ENCODE measurements at regions of chr9 and their contacts with region 1.

Region 1: GRCh38 chr9:134325817-134326723 is at the start of gene RXRA:
- DNase-seq: peak; percentile 86 to 94 (median 90)
- ATAC-seq: peak; percentile 19 to 72 (median 66)
- H3K4me3 ChIP-seq: peak within 1 kb of the TSS; percentile 50 to 99 (median 84)
- H3K27ac ChIP-seq: peak within 1 kb of the TSS; percentile 91 to 100 (median 97)
- H3K4me1 ChIP-seq: peaks cover 16 to 65% (median 50%) of the 10 kb centered on the region in 12 donors
- H3K27me3 ChIP-seq: no peaks in the 10 kb centered on the region
- CTCF ChIP-seq: peak in 6 of 12 donors; percentile 22 to 46 (median 30)
- POLR2A ChIP-seq: peak; percentile 4 to 89
- total RNA-seq, gene RXRA: 45.5 to 87.9 (median 52.9) TPM

Region 2: DNA sequence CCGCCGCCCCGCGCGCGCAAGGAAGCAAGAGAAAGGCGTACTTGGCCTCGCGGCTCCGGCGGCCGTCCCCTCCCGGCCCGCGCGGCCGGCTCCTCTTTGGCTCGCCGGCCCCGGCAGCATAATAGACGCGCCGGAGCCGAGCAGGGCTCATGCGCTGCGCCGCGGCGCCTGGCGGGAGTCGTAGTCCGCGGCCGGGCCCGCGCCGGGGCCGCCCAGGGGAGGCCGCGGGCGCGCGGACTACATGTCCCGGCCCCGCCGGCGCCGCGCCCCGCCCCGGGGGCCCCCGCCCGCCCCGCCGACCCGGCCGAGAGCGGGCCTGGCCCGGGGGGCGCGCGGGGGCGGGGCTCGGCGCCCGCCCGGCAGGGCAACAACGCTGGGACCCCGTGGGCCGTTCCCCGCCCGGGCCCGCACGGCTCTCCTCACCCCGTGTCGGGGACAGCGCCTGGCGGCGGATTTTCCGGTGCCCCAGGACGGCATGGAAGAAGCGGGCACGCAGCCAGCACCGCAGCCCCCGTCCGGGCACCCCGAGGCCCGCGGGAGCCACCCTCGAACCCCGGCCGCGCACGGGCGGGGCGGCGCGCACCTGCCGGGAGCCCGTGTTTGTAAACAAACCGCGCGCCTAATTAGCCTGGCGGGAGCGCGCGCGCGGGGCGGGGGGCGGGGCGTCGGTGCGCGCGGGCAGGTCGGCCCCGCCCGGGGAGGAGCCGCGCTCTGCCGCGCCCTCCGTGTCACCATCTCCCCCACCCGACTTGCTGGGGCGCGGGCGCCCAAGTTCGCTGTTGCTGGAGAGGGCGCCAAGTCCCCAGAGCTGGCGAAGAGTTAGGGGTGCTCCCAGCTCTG is 257.9 kb before region 1 on chr9 and contains the start of gene BRD3:
- intact Hi-C with region 1: loop called in 1 of 10 experiments (anchors 5 kb)
- DNase-seq: peak; percentile 87 to 93 (median 89)
- ATAC-seq: peak; percentile 84 to 93 (median 90)
- H3K4me3 ChIP-seq: peak within 1 kb of the TSS; percentile 64 to 100 (median 90)
- H3K27ac ChIP-seq: peak within 1 kb of the TSS; percentile 95 to 100 (median 98)
- H3K4me1 ChIP-seq: peaks cover 0 to 45% (median 32%) of the 10 kb centered on the region in 12 donors
- H3K27me3 ChIP-seq: peaks cover 0 to 2% (median 0%) of the 10 kb centered on the region in 9 donors
- CTCF ChIP-seq: no peak
- POLR2A ChIP-seq: peak; percentile 10 to 75
- total RNA-seq, gene BRD3: 14.0 to 37.3 (median 29.3) TPM

Region 3: GRCh38 chr9:134171316-134172197 is 154.5 kb before region 1 on chr9:
- intact Hi-C with region 1: loop called (anchors 2 to 10 kb)
- DNase-seq: no peak
- ATAC-seq: no peak
- H3K4me3 ChIP-seq: no peak overlapping the region
- H3K27ac ChIP-seq: peak overlapping the region in 7 of 12 donors; percentile 19 to 55 (median 31)
- H3K4me1 ChIP-seq: peaks cover 0 to 38% (median 16%) of the 10 kb centered on the region in 12 donors
- H3K27me3 ChIP-seq: peaks cover 0 to 24% (median 8%) of the 10 kb centered on the region in 9 donors
- CTCF ChIP-seq: no peak
- POLR2A ChIP-seq: no peak

Region 4: DNA sequence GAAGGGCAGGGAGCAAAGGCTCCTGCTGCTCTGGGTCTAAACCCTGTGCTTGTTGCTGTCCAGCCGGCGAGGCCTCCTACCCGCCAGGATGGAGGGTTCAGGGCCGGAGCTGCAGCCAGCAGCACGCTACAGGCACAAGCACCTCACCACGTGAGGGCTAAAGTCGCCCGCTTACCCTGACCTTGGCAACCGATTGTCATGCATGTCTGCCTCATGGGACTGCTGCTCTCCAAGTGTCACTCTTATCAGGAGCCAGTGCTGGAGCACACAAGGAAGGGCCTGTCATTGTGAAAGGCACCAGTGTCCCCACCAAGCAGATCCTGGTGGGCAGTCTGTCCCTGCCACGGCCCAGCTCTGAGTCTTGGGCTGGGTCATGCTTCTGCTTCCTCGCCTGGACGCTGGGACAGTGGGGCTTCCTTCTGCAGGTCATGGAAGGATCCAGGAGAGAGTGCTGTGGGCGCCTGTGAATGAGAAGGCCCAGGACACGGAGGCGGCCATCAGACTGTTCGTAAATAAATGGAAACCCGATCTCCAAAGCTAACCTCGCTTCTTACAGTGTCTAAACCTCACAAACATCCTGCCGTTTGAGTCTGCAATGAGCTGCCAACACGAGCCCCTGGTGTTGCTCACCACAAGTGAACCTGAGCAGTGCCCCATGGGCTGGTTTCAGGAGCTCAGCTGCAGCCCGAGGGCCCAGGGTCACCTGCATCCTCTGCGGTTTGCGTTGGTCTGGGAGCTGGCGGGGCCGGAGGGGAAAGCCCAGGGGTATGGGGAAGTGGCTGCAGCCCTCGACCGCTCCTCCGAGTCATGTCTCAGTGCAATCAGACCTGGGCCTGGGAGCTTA is 58.0 kb before region 1 on chr9:
- intact Hi-C with region 1: loop called in 2 of 10 experiments (anchors 5 kb)
- DNase-seq: peak in 4 of 5 donors; percentile 39 to 73 (median 55)
- ATAC-seq: peak; percentile 73 to 85 (median 80)
- H3K4me3 ChIP-seq: no peak overlapping the region
- H3K27ac ChIP-seq: peak overlapping the region in 11 of 12 donors; percentile 2 to 79 (median 57)
- H3K4me1 ChIP-seq: peaks cover 0 to 17% (median 10%) of the 10 kb centered on the region in 12 donors
- H3K27me3 ChIP-seq: peaks cover 0 to 26% (median 0%) of the 10 kb centered on the region in 9 donors
- CTCF ChIP-seq: no peak
- POLR2A ChIP-seq: no peak

Region 5: GRCh38 chr9:134365791-134366688 is 40.0 kb after region 1 on chr9:
- intact Hi-C with region 1: loop called in 3 of 10 experiments (anchors 2 to 5 kb)
- DNase-seq: peak; percentile 89 to 96 (median 91)
- ATAC-seq: peak; percentile 83 to 90 (median 86)
- H3K4me3 ChIP-seq: peak overlapping the region in 9 of 12 donors; percentile 9 to 37 (median 23)
- H3K27ac ChIP-seq: peak overlapping the region in 11 of 12 donors; percentile 45 to 93 (median 80)
- H3K4me1 ChIP-seq: peaks cover 15 to 92% (median 68%) of the 10 kb centered on the region in 12 donors
- H3K27me3 ChIP-seq: no peaks in the 10 kb centered on the region
- CTCF ChIP-seq: peak in 4 of 12 donors; percentile 12 to 38 (median 26)
- POLR2A ChIP-seq: peak in 1 of 2 donors; percentile 49

Region 6: GRCh38 chr9:134413890-134414731 is 88.0 kb after region 1 on chr9:
- intact Hi-C with region 1: loop called in 4 of 10 experiments (anchors 5 to 10 kb)
- DNase-seq: peak; percentile 71 to 92 (median 85)
- ATAC-seq: peak; percentile 66 to 78 (median 70)
- H3K4me3 ChIP-seq: no peak overlapping the region
- H3K27ac ChIP-seq: peak overlapping the region in 11 of 12 donors; percentile 47 to 82 (median 68)
- H3K4me1 ChIP-seq: peaks cover 19 to 91% (median 68%) of the 10 kb centered on the region in 12 donors
- H3K27me3 ChIP-seq: no peaks in the 10 kb centered on the region
- CTCF ChIP-seq: no peak
- POLR2A ChIP-seq: no peak

Region 7: DNA sequence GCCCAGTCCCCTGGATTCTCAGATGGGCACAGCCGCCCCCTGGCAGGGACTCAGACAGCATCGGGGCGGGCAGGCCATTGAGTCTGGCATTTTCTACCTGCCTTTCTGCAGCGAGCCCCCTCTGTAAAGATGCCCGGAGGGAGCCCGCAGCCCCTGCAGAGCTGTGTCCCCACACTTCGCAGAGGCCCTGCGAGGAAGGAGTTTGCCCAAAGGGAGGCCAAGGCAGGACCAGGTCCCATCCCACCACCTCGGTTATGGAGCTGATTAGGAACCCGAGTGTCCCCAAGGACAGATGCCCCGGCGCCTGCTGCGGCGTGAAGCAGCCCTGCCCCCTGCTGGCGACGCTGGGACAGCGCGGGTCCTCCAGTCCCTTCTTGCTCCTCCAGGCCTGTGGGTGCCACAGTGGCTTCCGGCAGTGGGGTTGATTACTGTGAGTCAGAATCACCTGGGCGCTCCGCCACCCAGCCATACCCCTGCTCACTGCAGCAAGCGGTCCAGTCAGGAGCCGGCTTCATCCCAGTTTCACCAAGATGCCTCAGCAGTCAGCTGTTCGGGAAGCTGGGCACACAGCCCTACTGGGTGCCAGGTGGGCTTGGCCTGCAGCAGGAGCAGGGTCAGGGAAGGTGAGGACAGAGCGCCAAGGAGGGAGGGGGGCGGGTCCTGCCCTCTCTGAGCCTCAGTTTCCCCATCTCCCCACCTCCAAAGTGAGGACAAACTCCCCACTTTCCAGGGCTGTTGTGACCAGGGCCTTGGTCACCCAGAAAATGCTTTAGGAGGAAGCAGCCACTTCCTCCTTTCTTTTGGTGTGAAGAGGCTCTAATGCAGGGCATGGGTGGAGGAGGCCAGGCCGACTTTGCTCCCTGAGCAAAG is 117.3 kb after region 1 on chr9:
- intact Hi-C with region 1: loop called in 6 of 10 experiments (anchors 5 to 10 kb)
- DNase-seq: peak; percentile 82 to 93 (median 86)
- ATAC-seq: peak; percentile 44 to 90 (median 82)
- H3K4me3 ChIP-seq: peak overlapping the region in 1 of 12 donors; percentile 12
- H3K27ac ChIP-seq: peak overlapping the region in 1 of 12 donors; percentile 67
- H3K4me1 ChIP-seq: peaks cover 9 to 50% (median 39%) of the 10 kb centered on the region in 12 donors
- H3K27me3 ChIP-seq: no peaks in the 10 kb centered on the region
- CTCF ChIP-seq: peak; percentile 96 to 99 (median 99)
- POLR2A ChIP-seq: no peak

Measured in heart left ventricle (tissue), 16 donors.